Right cardiac atrium (tissue), 5 donors: ENCODE measurements at regions of chr17 and their contacts with region 1.

Region 1: GRCh38 chr17:9009737-9010136 is 11.6 kb upstream of the NTN1 start:
- DNase-seq: no peak
- ATAC-seq: no peak
- H3K4me3 ChIP-seq: no peak overlapping the region
- H3K27ac ChIP-seq: no peak overlapping the region
- H3K4me1 ChIP-seq: no peaks in the 10 kb centered on the region
- H3K27me3 ChIP-seq: no peaks in the 10 kb centered on the region

Region 2: GRCh38 chr17:8859027-8859803 is 150.5 kb before region 1 on chr17:
- intact Hi-C with region 1: no loop called
- DNase-seq: no peak
- ATAC-seq: no peak
- H3K4me3 ChIP-seq: no peak overlapping the region
- H3K27ac ChIP-seq: no peak overlapping the region
- H3K4me1 ChIP-seq: peaks cover 2% of the 10 kb centered on the region
- H3K27me3 ChIP-seq: no peaks in the 10 kb centered on the region

Region 3: DNA sequence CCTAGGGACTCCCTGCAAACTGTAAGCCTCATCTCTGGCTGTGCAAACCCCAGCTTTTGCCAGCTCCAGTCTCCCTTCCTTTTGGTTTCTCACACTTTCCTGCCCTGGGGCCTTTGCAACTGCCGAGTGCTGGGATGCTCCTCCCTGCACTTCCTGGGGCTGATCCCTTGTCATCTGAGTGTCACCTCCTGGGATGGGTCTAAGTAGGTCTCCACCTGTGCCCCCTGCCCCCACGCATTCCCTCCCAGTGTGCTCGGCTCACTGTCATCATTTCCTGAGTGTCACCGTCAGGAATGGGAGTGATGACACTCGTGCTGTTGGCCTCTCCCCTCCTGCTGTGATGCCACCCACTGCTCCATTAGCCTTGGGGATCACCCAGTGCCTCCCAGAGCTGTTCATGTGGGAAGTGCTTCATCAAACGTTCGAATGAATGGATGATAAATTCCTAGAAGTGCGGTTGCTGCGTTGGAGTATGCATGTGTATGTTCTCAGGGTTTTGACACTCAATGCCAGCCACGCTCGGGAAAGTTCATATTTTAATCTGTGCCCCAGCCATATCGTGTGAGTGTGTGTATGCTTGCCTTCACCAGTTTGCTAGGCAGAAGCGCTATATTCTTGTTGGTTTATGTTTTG is 201.5 kb after region 1 on chr17:
- intact Hi-C with region 1: loop called in 1 of 4 experiments (anchors 5 kb)
- DNase-seq: no peak
- ATAC-seq: no peak
- H3K4me3 ChIP-seq: no peak overlapping the region
- H3K27ac ChIP-seq: no peak overlapping the region
- H3K4me1 ChIP-seq: no peaks in the 10 kb centered on the region
- H3K27me3 ChIP-seq: no peaks in the 10 kb centered on the region